T-cell (primary cell): ENCODE measurements at regions of chr14 and their contacts with region 1.

Region 1: GRCh38 chr14:69690042-69690441 is 76.9 kb upstream of the SRSF5 start:
- DNase-seq: no peak
- ATAC-seq: no peak
- H3K4me3 ChIP-seq: no peak overlapping the region
- H3K4me3 Mint-ChIP-seq: no peak overlapping the region
- H3K27ac ChIP-seq: no peak overlapping the region
- H3K27ac Mint-ChIP-seq: no peak overlapping the region
- H3K4me1 ChIP-seq: peaks cover 8 to 24% of the 10 kb centered on the region in 2 experiments
- H3K4me1 Mint-ChIP-seq: peaks cover 77 to 81% (median 78%) of the 10 kb centered on the region in 3 donors
- H3K27me3 ChIP-seq: no peaks in the 10 kb centered on the region
- H3K27me3 Mint-ChIP-seq: no peaks in the 10 kb centered on the region

Region 2: GRCh38 chr14:69620111-69620611 is 69.9 kb before region 1 on chr14:
- CTCF ChIA-PET with region 1: no interaction called
- POLR2A ChIA-PET with region 1: no interaction called
- DNase-seq: no peak
- ATAC-seq: no peak
- H3K4me3 ChIP-seq: no peak overlapping the region
- H3K4me3 Mint-ChIP-seq: peak overlapping the region; percentile 17 to 97 (median 44)
- H3K27ac ChIP-seq: peak overlapping the region; percentile 86
- H3K27ac Mint-ChIP-seq: peak overlapping the region; percentile 97 to 100
- H3K4me1 ChIP-seq: peaks cover 60 to 70% of the 10 kb centered on the region in 2 experiments
- H3K4me1 Mint-ChIP-seq: peaks cover 95 to 98% (median 96%) of the 10 kb centered on the region in 3 donors
- H3K27me3 ChIP-seq: no peaks in the 10 kb centered on the region
- H3K27me3 Mint-ChIP-seq: no peaks in the 10 kb centered on the region

Region 3: DNA sequence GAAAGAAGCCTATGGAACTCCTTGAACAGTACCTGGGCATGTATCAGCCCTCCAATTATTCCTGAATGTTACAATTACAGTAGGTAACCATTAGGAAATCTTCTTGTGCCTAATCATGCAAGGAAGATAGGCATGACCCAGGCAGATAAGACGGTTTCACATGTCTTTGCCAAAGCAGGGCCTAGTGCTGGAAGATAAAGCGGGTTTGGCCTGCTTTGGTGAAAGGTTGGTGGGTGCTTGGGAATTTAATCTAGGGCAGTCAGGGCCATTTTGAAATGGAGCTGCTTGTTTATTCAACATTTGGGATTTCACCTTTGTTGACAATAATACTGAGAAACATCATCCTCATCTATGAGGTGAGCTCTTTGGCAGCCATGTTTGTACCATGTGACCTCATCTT is 64.4 kb after region 1 on chr14:
- CTCF ChIA-PET with region 1: no interaction called
- POLR2A ChIA-PET with region 1: interaction called in 1 of 2 experiments, 12 read pairs
- DNase-seq: no peak
- ATAC-seq: no peak
- H3K4me3 ChIP-seq: no peak overlapping the region
- H3K4me3 Mint-ChIP-seq: no peak overlapping the region
- H3K27ac ChIP-seq: no peak overlapping the region
- H3K27ac Mint-ChIP-seq: no peak overlapping the region
- H3K4me1 ChIP-seq: peaks cover 7 to 9% of the 10 kb centered on the region in 2 experiments
- H3K4me1 Mint-ChIP-seq: peaks cover 12 to 18% (median 17%) of the 10 kb centered on the region in 3 donors
- H3K27me3 ChIP-seq: no peaks in the 10 kb centered on the region
- H3K27me3 Mint-ChIP-seq: no peaks in the 10 kb centered on the region